Left colon (tissue), 2 donors: ENCODE measurements at regions of chr4 and their contacts with region 1.

Region 1: GRCh38 chr4:55345980-55346850 is at the start of gene SRD5A3:
- DNase-seq: peak; percentile 74 to 90
- ATAC-seq: peak; percentile 95
- total RNA-seq, gene SRD5A3: 14.1 to 16.2 TPM

Region 2: DNA sequence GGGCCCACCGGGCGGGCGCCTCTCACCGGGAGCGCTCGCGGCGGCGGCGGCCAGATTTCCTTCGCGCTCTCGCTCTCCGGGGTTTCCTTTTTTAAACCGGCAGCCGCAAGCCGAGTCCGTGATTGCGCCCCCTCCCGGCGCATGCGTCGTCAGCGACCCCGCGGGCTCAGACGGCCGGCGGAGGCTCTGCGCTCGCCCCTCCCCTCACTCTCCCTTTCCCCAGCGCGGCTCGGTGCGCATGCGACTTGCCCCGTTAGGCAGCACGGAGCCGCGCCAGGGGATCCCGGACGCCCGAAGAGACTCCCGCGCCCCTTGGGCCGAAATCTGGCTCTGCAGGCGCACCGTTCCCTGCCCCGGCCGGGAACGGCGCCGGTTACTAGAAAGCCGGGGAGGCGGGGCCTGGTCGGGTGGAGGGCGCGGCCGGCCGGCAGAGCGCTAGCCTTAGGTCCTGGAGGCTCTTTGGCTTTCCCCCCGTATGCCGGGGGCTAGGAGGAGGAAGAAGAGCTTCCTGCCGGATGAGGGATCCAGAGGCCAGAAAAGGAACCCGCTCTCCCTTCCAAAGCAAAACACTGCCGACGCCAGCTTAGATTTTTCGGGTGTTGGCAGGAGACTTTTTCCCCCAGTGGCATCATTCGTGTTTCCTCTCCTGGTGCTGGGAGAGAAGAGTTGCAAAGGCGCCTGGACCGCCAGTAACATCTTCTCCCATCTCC is 200.7 kb after region 1 on chr4 and contains the start of gene CLOCK:
- intact Hi-C with region 1: loop called in 1 of 2 experiments (anchors 5 kb)
- DNase-seq: peak; percentile 84 to 89
- ATAC-seq: peak; percentile 74
- total RNA-seq, gene CLOCK: 19.0 to 21.9 TPM

Region 3: DNA sequence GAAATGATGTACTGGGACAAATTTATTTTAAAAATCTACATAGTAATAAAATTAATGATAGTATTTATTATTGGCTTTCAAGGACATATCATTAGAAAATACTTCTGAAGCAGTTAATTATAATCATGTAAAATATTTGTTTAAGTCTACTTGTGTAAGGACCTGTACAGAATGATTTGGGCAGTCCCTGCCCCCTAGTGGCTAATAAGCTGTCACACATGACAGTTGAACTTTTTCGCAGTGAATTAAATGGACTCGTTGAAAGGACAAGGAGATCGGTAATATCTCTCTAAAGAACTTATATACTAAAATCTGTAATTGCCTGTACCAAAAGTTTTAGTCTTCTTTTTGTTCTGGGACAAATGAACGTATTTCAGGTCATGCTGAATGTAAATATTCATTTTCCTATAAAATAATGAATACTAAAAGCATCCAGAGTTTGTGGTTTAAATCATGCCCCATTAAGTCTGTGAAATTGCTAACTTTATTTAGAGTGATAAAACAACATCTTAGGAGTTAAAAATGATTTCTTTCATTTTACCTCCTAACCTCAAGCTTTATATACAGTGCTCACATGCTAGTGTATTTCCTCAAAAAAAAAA is 520.9 kb after region 1 on chr4:
- intact Hi-C with region 1: loop called in 1 of 2 experiments (anchors 10 kb)
- DNase-seq: no peak
- ATAC-seq: peak; percentile 82

Region 4: GRCh38 chr4:56026596-56026995 is 680.4 kb after region 1 on chr4:
- intact Hi-C with region 1: no loop called
- DNase-seq: no peak
- ATAC-seq: no peak